Mammary epithelial cell (primary cell): ENCODE measurements at regions of chr14 and their contacts with region 1.

Region 1: DNA sequence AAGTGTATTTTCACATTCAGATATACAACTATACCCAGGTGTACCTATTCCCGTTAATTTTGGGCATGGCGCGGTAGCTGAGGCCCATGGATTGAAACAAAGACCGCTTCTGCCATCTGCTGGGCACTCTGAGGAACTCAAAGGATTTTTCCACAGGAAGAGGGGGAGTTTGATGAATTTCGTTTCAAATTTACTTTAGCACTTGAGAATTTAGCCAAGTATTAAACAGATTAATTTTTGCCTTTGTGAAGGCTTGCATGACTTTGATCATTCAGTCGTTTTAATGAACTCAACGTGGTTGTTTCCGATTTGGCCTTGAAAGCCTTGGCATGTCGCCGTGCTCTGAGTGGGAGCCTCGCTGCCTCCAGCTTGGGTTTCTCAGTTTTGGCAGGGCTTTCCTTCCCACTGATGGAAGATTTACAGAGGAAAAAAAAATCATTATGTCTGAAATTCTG is 153.2 kb upstream of the DDHD1 start:
- DNase-seq: no peak
- H3K4me3 ChIP-seq: peak overlapping the region; percentile 36 to 57 (median 49)
- H3K27ac ChIP-seq: no peak overlapping the region
- H3K4me1 ChIP-seq: peaks cover 10% of the 10 kb centered on the region
- H3K27me3 ChIP-seq: no peaks in the 10 kb centered on the region
- CTCF ChIP-seq: peak; percentile 63 to 77

Region 2: DNA sequence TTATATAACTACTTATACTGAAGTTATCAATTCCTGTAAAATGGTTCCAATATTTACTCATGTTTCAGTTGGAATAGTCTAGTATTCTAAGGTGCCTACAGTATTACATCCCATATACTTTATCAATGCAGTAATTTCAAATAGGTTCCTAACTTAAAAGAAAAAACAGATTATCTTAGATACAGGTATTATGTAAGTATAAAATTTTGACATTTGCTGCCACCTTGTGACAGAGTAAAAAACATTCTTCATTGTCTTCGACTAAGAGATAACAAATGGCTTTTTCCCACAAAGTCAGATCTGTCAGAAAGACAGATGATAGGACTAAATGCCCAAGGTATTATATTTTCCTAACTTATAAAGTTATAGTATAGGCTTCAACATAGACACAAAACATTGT is 832.7 kb before region 1 on chr14:
- CTCF ChIA-PET with region 1: no interaction called
- dilution Hi-C with region 1: no loop called
- in situ Hi-C with region 1: no loop called
- intact Hi-C with region 1: loop called (anchors 10 kb)
- DNase-seq: peak; percentile 31
- H3K4me3 ChIP-seq: no peak overlapping the region
- H3K27ac ChIP-seq: no peak overlapping the region
- H3K4me1 ChIP-seq: no peaks in the 10 kb centered on the region
- H3K27me3 ChIP-seq: no peaks in the 10 kb centered on the region
- CTCF ChIP-seq: peak; percentile 16 to 42

Region 3: DNA sequence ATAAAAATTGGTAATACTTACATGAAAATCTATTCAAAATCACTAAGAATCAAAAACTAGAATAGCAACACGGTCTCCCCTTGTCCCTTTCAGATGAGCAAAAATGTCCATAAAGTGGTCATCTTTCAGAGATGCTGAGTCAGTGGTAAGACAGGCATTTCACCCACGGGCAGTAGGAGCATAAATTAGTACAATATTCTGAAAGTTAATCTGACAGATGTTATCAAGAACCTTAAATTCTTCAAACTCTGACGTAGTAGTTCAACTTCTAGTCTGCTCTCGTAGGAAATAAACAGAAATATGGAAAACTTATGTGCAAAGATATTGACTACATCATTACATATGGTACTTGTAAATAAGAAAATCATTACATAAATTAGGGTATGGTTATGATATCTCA is 481.8 kb before region 1 on chr14:
- CTCF ChIA-PET with region 1: no interaction called
- dilution Hi-C with region 1: no loop called
- in situ Hi-C with region 1: loop called in 1 of 2 experiments (anchors 25 kb)
- intact Hi-C with region 1: loop called (anchors 2 kb)
- DNase-seq: no peak
- H3K4me3 ChIP-seq: no peak overlapping the region
- H3K27ac ChIP-seq: no peak overlapping the region
- H3K4me1 ChIP-seq: no peaks in the 10 kb centered on the region
- H3K27me3 ChIP-seq: no peaks in the 10 kb centered on the region
- CTCF ChIP-seq: no peak

Region 4: GRCh38 chr14:53055003-53055402 is 251.3 kb before region 1 on chr14:
- CTCF ChIA-PET with region 1: no interaction called
- dilution Hi-C with region 1: no loop called
- in situ Hi-C with region 1: no loop called
- intact Hi-C with region 1: loop called (anchors 5 kb)
- DNase-seq: peak; percentile 40
- H3K4me3 ChIP-seq: no peak overlapping the region
- H3K27ac ChIP-seq: no peak overlapping the region
- H3K4me1 ChIP-seq: no peaks in the 10 kb centered on the region
- H3K27me3 ChIP-seq: no peaks in the 10 kb centered on the region
- CTCF ChIP-seq: peak; percentile 72 to 82